ENCODE measurements at regions of chr2 and their contacts with region 1.

Region 1: DNA sequence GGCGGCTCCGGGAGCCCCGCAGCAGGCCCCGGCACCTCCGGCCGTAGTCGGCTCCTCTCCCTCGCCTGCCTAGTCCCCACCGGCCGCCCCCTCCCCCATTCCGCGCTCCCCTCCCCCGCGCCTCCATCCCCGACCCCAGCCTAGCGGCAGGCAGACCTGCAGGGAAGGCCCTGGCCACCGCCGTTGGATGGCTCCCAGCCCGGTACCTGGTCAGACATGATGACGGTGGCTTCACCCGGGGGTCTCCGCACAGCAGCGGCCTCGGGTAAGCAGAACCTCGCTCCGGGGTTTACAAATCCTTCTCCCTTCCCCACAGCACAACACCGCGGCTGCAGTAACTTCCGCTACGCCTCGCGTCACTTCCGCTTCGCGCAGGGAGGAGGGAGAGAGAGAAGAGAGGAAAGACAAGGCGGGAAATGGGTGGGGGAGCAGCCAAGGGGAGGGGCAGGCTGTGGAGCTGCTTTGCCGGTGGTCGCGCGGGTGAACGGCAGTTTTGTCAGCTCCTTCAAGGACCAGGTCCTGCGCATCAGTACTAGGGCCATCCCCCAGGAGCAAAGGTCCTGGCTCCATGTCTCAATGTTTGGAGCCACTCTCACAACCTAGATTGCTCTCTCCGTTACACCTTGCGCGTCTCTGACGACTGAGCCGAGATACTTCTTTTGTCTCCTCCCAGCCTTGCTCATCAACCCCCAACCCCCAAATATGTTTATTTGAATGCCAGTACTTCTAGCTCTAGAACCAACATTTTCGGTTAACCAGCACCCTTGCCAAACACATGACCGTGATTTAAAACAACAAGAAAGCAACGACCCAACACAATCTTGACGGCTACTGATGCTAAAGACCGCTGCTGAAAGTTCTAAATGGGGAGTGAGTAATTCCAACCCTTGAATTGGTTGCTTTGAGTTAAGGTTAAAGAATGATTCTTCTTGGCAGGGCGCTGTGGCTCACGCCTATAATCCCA is at the start of gene SUMO1:
- DNase-seq: peak; percentile 90
- H3K4me3 Mint-ChIP-seq: peak within 1 kb of the TSS; percentile 93
- H3K27ac Mint-ChIP-seq: peak within 1 kb of the TSS; percentile 85
- H3K4me1 Mint-ChIP-seq: peaks cover 8% of the 10 kb centered on the region
- H3K27me3 Mint-ChIP-seq: no peaks in the 10 kb centered on the region
- CTCF ChIP-seq: no peak
- total RNA-seq, gene SUMO1: 67.9 and 71.9 TPM in 2 replicates

Region 2: DNA sequence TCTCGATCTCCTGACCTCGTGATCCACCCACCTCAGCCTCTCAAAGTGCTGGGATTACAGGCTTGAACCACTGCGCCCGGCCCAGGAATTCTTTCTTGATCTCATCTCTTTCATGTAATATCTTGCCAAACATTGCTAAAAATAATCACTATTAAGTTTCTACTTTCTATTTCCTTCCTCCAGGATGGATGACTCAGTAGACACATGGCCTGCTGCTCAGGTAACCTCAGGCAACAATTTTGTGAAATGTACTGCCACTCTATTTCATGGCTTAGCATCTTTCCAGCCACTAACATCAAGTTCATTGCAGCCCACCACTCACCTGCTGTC is 11.0 kb after region 1 on chr2:
- CTCF ChIA-PET with region 1: interaction called, 6 read pairs
- POLR2A ChIA-PET with region 1: interaction called, 48 read pairs
- intact Hi-C with region 1: no loop called
- DNase-seq: peak; percentile 82
- H3K4me3 Mint-ChIP-seq: peak overlapping the region; percentile 72
- H3K27ac Mint-ChIP-seq: peak overlapping the region; percentile 98
- H3K4me1 Mint-ChIP-seq: peaks cover 8% of the 10 kb centered on the region
- H3K27me3 Mint-ChIP-seq: no peaks in the 10 kb centered on the region
- CTCF ChIP-seq: no peak

Region 3: GRCh38 chr2:202265467-202266277 is 27.2 kb after region 1 on chr2 and contains the start of gene NOP58:
- CTCF ChIA-PET with region 1: no interaction called
- POLR2A ChIA-PET with region 1: interaction called, 58 read pairs
- intact Hi-C with region 1: loop called (anchors 1 kb)
- DNase-seq: peak; percentile 96
- H3K4me3 Mint-ChIP-seq: no peak within 1 kb of the TSS
- H3K27ac Mint-ChIP-seq: peak within 1 kb of the TSS; percentile 64
- H3K4me1 Mint-ChIP-seq: peaks cover 7% of the 10 kb centered on the region
- H3K27me3 Mint-ChIP-seq: no peaks in the 10 kb centered on the region
- CTCF ChIP-seq: no peak
- total RNA-seq, gene NOP58: 212 and 231 TPM in 2 replicates

Region 4: GRCh38 chr2:202460119-202460518 is 221.6 kb after region 1 on chr2:
- CTCF ChIA-PET with region 1: no interaction called
- POLR2A ChIA-PET with region 1: no interaction called
- intact Hi-C with region 1: no loop called
- DNase-seq: no peak
- H3K4me3 Mint-ChIP-seq: no peak overlapping the region
- H3K27ac Mint-ChIP-seq: no peak overlapping the region
- H3K4me1 Mint-ChIP-seq: no peaks in the 10 kb centered on the region
- H3K27me3 Mint-ChIP-seq: no peaks in the 10 kb centered on the region
- CTCF ChIP-seq: no peak